Activated naive CD4-positive, alpha-beta T cell treated with anti-CD3 and anti-CD28 coated beads for 36 hours (primary cell): ENCODE measurements at regions of chr22 and their contacts with region 1.

Region 1: DNA sequence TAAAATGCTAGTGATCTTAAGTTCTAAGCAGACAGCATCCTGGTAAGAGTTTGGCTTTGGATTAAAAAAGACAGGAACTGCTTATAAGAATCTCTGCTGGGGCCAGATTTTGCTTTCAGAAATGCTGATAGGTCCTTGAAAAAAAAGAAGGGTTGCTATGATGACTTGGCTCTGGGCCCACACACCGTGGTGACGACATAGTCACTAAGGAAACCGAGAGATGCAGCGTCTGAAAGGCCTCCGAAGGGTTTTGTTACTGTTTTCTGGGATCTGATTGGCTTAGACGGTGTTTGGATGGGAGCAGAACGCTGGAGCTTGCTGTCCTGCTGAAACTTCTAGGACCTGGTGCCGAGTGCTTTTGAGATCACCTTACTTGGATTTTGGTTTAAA is 8.4 kb downstream of the FAM118A start:
- DNase-seq: peak; percentile 97
- H3K4me3 Mint-ChIP-seq: peak overlapping the region; percentile 81
- H3K27ac Mint-ChIP-seq: peak overlapping the region; percentile 98
- H3K4me1 Mint-ChIP-seq: peaks cover 86% of the 10 kb centered on the region
- H3K27me3 Mint-ChIP-seq: no peaks in the 10 kb centered on the region

Region 2: DNA sequence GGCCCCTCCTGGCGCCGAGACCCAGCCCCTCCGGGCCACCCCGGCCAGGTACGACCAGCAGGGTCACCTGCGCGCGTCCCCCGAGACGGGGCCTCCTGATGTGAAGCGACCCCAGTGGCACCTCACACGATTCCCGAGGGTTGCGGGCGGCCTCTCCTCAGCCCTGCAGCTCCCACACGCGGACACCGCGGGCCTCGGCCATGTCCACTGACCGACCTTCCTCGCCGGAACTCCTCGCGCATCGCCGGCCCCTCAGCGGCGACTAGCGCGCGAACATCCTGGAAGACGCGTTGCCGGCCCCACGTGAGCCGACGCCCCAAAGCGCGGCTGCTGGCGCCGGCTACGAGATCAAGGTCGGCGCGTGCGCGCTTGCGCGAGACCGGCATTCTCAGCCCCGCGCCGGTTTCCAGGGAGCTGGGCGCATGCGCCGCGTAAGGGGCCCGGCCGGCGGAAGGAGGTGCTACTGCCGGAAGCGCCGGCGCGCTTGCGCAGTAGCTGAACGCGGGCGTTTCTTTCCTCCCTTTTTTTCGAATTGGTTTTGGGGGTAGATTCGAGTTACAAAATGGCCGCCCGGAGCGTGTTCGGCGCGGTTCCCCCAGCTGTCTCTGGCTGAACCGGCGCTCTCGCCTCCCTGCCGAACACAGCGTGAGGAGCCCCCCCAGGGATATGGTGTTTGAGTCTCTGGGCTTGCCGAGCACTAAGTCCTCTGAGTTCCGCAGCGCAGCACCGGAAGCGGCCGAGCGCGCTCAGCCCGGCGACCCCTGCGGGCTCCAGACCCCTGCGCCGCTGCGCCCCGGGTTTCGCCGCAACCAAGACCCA is 154.5 kb before region 1 on chr22 and contains the start of gene NUP50:
- CTCF ChIA-PET with region 1: no interaction called
- intact Hi-C with region 1: loop called (anchors 5 kb)
- DNase-seq: peak; percentile 95
- H3K4me3 Mint-ChIP-seq: peak within 1 kb of the TSS; percentile 84
- H3K27ac Mint-ChIP-seq: peak within 1 kb of the TSS; percentile 96
- H3K4me1 Mint-ChIP-seq: peaks cover 61% of the 10 kb centered on the region
- H3K27me3 Mint-ChIP-seq: no peaks in the 10 kb centered on the region
- total RNA-seq, gene NUP50: 151 to 154 TPM

Region 3: GRCh38 chr22:45268958-45269844 is 49.0 kb before region 1 on chr22:
- CTCF ChIA-PET with region 1: no interaction called
- intact Hi-C with region 1: loop called (anchors 2 kb)
- DNase-seq: peak; percentile 78
- H3K4me3 Mint-ChIP-seq: peak overlapping the region; percentile 69
- H3K27ac Mint-ChIP-seq: no peak overlapping the region
- H3K4me1 Mint-ChIP-seq: peaks cover 6% of the 10 kb centered on the region
- H3K27me3 Mint-ChIP-seq: peaks cover 4% of the 10 kb centered on the region

Region 4: GRCh38 chr22:45284705-45285262 is 33.4 kb before region 1 on chr22 and contains the start of gene UPK3A:
- CTCF ChIA-PET with region 1: no interaction called
- intact Hi-C with region 1: loop called (anchors 5 kb)
- DNase-seq: peak; percentile 62
- H3K4me3 Mint-ChIP-seq: peak within 1 kb of the TSS; percentile 38
- H3K27ac Mint-ChIP-seq: no peak within 1 kb of the TSS
- H3K4me1 Mint-ChIP-seq: peaks cover 10% of the 10 kb centered on the region
- H3K27me3 Mint-ChIP-seq: peaks cover 2% of the 10 kb centered on the region
- total RNA-seq, gene UPK3A: not detected

Region 5: GRCh38 chr22:45341498-45341897 is 23.3 kb after region 1 on chr22:
- CTCF ChIA-PET with region 1: no interaction called
- intact Hi-C with region 1: loop called (anchors 1 kb)
- DNase-seq: peak; percentile 79
- H3K4me3 Mint-ChIP-seq: no peak overlapping the region
- H3K27ac Mint-ChIP-seq: peak overlapping the region; percentile 69
- H3K4me1 Mint-ChIP-seq: peaks cover 28% of the 10 kb centered on the region
- H3K27me3 Mint-ChIP-seq: no peaks in the 10 kb centered on the region

Region 6: GRCh38 chr22:45413368-45414211 is 95.4 kb after region 1 on chr22 and contains the starts of genes RIBC2 and SMC1B:
- CTCF ChIA-PET with region 1: no interaction called
- intact Hi-C with region 1: loop called (anchors 2 kb)
- DNase-seq: peak; percentile 95
- H3K4me3 Mint-ChIP-seq: peak within 1 kb of the TSS; percentile 86
- H3K27ac Mint-ChIP-seq: no peak within 1 kb of the TSS
- H3K4me1 Mint-ChIP-seq: peaks cover 12% of the 10 kb centered on the region
- H3K27me3 Mint-ChIP-seq: no peaks in the 10 kb centered on the region
- total RNA-seq, gene RIBC2: 6.2 to 6.3 TPM
- total RNA-seq, gene SMC1B: 1.1 to 1.3 TPM